Transverse colon (tissue), 4 donors: ENCODE measurements at regions of chr6 and their contacts with region 1.

Region 1: DNA sequence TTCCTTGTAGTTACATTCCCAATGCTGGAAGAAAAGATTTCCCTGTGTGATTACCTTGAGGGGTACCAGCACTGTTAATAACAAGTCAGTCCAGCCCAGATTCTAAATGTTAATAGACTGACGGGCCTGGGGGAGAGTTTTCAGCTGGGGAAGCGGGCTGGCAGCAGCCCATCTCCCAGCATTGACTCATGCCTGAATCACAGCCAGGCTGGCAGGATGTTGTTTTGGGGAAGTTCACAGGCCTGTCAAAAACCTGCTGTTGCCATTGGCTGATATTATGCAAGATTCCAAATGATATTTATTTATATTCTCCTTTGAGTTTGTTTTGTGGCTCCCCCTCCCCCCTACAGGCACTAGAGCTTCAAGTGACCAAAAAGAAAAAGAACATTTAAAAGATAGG is 213.9 kb upstream of the CNR1 start:
- DNase-seq: no peak
- H3K4me3 ChIP-seq: no peak overlapping the region
- H3K27ac ChIP-seq: no peak overlapping the region
- H3K4me1 ChIP-seq: no peaks in the 10 kb centered on the region
- H3K27me3 ChIP-seq: no peaks in the 10 kb centered on the region
- CTCF ChIP-seq: no peak
- EP300 ChIP-seq: no peak
- POLR2A ChIP-seq: no peak

Region 2: GRCh38 chr6:87154993-87155841 is 1224.9 kb before region 1 on chr6 and contains the start of gene ZNF292:
- in situ Hi-C with region 1: no loop called
- intact Hi-C with region 1: loop called (anchors 5 kb)
- DNase-seq: peak; percentile 98
- H3K4me3 ChIP-seq: peak within 1 kb of the TSS; percentile 91 to 95 (median 92)
- H3K27ac ChIP-seq: peak within 1 kb of the TSS; percentile 95 to 98 (median 96)
- H3K4me1 ChIP-seq: peaks cover 15 to 67% (median 44%) of the 10 kb centered on the region in 4 donors
- H3K27me3 ChIP-seq: no peaks in the 10 kb centered on the region
- CTCF ChIP-seq: peak in 1 of 5 experiments; percentile 7
- EP300 ChIP-seq: peak; percentile 8
- POLR2A ChIP-seq: peak; percentile 76
- total RNA-seq, gene ZNF292: 18.5 to 61.8 (median 42.4) TPM

Region 3: GRCh38 chr6:87382861-87383260 is 997.2 kb before region 1 on chr6:
- in situ Hi-C with region 1: no loop called
- intact Hi-C with region 1: no loop called
- DNase-seq: no peak
- H3K4me3 ChIP-seq: no peak overlapping the region
- H3K27ac ChIP-seq: no peak overlapping the region
- H3K4me1 ChIP-seq: no peaks in the 10 kb centered on the region
- H3K27me3 ChIP-seq: no peaks in the 10 kb centered on the region
- CTCF ChIP-seq: no peak
- EP300 ChIP-seq: no peak
- POLR2A ChIP-seq: no peak